Aorta (tissue), 5 donors: ENCODE measurements at regions of chr1 and their contacts with region 1.

Region 1: GRCh38 chr1:55021965-55022546 is 17.3 kb upstream of the PCSK9 start:
- DNase-seq: peak; percentile 86 to 94
- ATAC-seq: peak; percentile 92
- H3K4me3 ChIP-seq: no peak overlapping the region
- H3K27ac ChIP-seq: no peak overlapping the region
- H3K4me1 ChIP-seq: no peaks in the 10 kb centered on the region
- H3K27me3 ChIP-seq: no peaks in the 10 kb centered on the region

Region 2: DNA sequence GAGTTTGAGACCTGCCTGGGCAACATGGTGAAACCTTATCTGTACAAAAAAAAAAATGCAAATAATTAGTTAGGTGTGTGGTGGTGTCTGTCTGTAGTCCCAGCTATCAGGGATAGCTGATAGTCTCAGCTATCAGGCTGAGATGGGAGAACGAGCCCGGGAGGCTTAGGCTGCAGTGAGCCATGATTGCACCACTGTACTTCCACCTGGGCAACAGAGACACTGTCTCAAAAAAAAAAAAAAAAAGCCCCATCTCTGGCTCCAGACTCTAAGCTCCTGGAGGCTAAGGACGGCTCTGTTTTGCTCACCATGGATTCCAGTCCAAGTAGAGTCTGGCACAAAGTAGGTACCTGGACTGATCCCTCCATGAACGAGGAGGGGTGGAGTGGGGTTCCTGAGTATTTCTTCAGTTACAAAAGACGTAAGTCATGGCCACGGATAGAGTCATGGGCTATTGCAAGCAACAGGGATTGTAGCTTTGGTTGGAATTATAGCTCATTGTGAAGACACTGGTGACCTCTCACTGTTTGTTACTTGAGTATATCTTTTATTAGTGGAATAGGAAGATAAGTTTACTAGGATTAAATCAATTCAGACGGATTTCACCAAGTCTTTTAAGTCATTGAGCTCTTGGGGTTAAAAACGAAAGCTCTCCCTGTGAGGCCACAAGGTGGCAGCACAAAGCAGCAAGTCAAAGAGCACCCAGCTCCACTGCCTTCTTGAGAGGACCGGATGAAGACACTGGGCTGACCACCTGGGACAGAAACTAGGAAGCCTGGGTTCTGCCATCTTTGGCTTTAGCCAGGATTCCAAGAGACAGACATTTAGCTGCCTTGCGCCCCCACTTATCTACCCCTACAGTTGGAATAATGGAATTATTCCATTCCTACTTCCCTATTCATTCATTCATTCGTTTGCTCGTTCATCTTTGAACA is 77.2 kb before region 1 on chr1:
- intact Hi-C with region 1: loop called in 1 of 2 experiments (anchors 1 kb)
- DNase-seq: peak; percentile 81 to 87
- ATAC-seq: peak; percentile 76
- H3K4me3 ChIP-seq: no peak overlapping the region
- H3K27ac ChIP-seq: no peak overlapping the region
- H3K4me1 ChIP-seq: no peaks in the 10 kb centered on the region
- H3K27me3 ChIP-seq: no peaks in the 10 kb centered on the region

Region 3: GRCh38 chr1:54950369-54951163 is 71.5 kb before region 1 on chr1:
- intact Hi-C with region 1: loop called in 1 of 2 experiments (anchors 1 kb)
- DNase-seq: peak; percentile 75 to 84
- ATAC-seq: peak; percentile 92
- H3K4me3 ChIP-seq: no peak overlapping the region
- H3K27ac ChIP-seq: peak overlapping the region in 1 of 2 donors; percentile 64
- H3K4me1 ChIP-seq: no peaks in the 10 kb centered on the region
- H3K27me3 ChIP-seq: no peaks in the 10 kb centered on the region